Caco-2 (cell line): ENCODE measurements at regions of chr2 and their contacts with region 1.

Region 1: DNA sequence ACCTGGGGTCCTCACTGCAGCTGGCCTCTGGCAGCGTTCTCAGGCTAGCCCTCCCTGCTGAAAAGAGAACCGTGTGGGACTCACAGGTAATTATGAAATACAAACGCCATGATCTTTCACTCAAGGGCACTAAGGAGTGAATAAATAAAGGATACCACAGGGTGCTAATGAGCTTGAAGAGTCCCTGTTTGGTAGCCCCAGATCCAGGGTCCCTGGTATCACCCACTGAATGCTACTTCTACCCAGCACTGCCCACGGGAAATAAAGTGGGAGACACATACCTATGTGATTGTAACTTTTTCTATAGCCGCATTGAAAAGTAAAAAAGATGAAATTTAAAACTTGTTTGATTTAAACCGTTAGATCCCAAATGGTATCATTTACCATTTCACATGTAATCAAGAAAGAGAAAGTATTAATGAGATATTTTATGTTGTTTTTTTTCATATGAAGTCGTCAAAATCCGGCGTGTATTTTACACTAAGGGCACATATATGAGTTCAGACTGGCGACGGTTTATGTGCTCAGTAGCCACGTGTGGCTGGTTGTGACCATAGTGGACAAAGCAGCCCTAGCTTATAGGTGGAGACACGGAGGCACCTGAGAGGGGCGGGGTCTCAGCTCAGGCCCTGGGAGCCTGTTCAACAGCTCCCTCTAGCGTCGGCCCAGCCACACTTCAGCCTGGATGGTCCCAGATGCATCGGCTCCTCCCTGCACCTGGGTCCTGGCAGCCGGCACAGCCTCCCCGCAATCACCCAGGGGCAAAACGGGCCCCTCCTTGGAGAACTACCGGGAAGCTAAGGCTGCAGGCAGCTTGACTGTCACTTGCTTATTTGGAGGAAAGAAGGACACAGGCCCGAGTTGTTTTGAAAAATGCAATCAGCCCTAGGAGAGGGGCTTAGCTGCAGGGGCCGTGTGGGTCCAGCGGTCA is 39.2 kb downstream of the ODC1 start:
- DNase-seq: peak; percentile 91 to 95
- H3K4me3 ChIP-seq: no peak overlapping the region
- H3K4me3 Mint-ChIP-seq: peak overlapping the region; percentile 47
- H3K27ac Mint-ChIP-seq: peak overlapping the region; percentile 65
- H3K4me1 ChIP-seq: peaks cover 13% of the 10 kb centered on the region
- H3K4me1 Mint-ChIP-seq: peaks cover 20% of the 10 kb centered on the region
- H3K27me3 ChIP-seq: no peaks in the 10 kb centered on the region
- H3K27me3 Mint-ChIP-seq: no peaks in the 10 kb centered on the region
- CTCF ChIP-seq: peak; percentile 96 to 97

Region 2: GRCh38 chr2:10097352-10098148 is 311.4 kb before region 1 on chr2:
- CTCF ChIA-PET with region 1: interaction called, 10 read pairs
- POLR2A ChIA-PET with region 1: no interaction called
- intact Hi-C with region 1: no loop called
- DNase-seq: peak; percentile 78 to 85
- H3K4me3 ChIP-seq: no peak overlapping the region
- H3K4me3 Mint-ChIP-seq: no peak overlapping the region
- H3K27ac Mint-ChIP-seq: no peak overlapping the region
- H3K4me1 ChIP-seq: no peaks in the 10 kb centered on the region
- H3K4me1 Mint-ChIP-seq: no peaks in the 10 kb centered on the region
- H3K27me3 ChIP-seq: no peaks in the 10 kb centered on the region
- H3K27me3 Mint-ChIP-seq: no peaks in the 10 kb centered on the region
- CTCF ChIP-seq: peak; percentile 88 to 98

Region 3: DNA sequence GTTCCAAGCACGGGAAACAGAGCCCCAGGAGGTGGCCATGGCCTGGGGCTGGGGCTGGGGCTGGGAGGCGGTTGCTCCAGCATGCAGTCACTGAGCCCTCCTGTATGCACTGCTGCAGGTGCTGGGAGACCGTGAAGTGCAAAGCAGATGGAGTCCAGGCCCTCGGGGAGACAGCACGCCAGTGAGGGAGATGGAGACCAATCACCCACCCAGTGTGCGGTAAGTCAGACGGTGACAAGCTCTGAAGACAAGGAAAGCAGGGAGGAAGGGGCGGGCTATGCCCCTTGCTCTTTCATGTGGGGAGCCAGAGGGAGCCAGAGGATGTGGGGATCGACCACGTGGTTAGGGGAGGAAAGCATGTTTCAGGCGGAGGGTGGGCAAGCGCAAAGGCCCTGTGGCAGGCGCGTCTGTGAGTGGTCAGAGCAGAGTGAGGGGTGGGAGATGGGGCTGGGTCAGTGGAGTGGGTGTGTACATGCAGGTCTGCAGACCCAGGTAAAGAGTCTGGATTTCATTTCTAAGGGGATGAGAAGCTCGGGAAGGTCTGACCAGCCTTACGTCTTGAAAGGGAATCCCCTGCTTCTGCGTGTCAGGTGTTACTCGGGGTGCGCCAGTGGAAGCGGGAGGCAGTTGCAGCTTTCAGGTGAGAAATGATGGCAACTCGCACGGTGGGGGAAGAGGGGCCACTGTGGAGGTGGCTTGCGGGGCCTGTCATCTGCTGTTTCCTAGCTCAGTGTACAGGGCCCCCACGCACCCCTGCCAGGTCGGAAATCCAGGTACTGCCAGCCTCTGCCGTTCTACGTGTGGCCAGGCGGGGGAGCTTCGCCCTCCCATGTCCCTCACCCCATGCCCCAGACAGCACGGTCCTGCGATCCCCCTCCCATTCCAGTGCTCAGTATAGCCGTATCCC is 266.9 kb before region 1 on chr2:
- CTCF ChIA-PET with region 1: interaction called, 22 read pairs
- POLR2A ChIA-PET with region 1: no interaction called
- intact Hi-C with region 1: loop called (anchors 1 kb)
- DNase-seq: peak in 1 of 2 experiments; percentile 56
- H3K4me3 ChIP-seq: no peak overlapping the region
- H3K4me3 Mint-ChIP-seq: no peak overlapping the region
- H3K27ac Mint-ChIP-seq: peak overlapping the region; percentile 23
- H3K4me1 ChIP-seq: 0 out of 2 replicates have a peak, but pooled peaks cover 5% of the 10 kb centered on the region
- H3K4me1 Mint-ChIP-seq: no peaks in the 10 kb centered on the region
- H3K27me3 ChIP-seq: no peaks in the 10 kb centered on the region
- H3K27me3 Mint-ChIP-seq: no peaks in the 10 kb centered on the region
- CTCF ChIP-seq: peak; percentile 45 to 62

Region 4: DNA sequence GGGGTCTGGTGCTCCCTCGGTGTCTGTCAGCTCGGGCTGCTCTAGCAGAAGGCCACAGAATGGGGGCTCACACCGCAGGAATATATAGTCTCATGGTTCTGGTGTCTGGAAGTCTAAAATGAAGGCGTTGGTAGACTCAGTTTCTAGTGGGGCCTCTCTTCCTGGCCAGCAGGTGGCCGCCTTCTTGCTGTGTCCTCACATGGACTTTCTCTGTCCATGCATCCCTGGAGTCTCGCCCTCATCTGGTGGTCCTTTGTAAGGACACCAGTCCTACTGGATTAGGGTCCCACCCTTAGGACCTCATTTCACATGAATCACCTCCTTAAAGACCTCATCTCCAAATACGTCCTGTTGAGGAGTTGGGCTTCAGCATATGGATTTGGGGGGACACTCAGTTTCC is 220.7 kb before region 1 on chr2:
- CTCF ChIA-PET with region 1: interaction called, 5 read pairs
- POLR2A ChIA-PET with region 1: no interaction called
- intact Hi-C with region 1: loop called (anchors 2 kb)
- DNase-seq: peak in 1 of 2 experiments; percentile 61
- H3K4me3 ChIP-seq: no peak overlapping the region
- H3K4me3 Mint-ChIP-seq: no peak overlapping the region
- H3K27ac Mint-ChIP-seq: no peak overlapping the region
- H3K4me1 ChIP-seq: no peaks in the 10 kb centered on the region
- H3K4me1 Mint-ChIP-seq: no peaks in the 10 kb centered on the region
- H3K27me3 ChIP-seq: no peaks in the 10 kb centered on the region
- H3K27me3 Mint-ChIP-seq: no peaks in the 10 kb centered on the region
- CTCF ChIP-seq: peak; percentile 54 to 88

Region 5: GRCh38 chr2:10269711-10270610 is 139.0 kb before region 1 on chr2:
- CTCF ChIA-PET with region 1: interaction called, 24 read pairs
- POLR2A ChIA-PET with region 1: no interaction called
- intact Hi-C with region 1: loop called (anchors 1 kb)
- DNase-seq: peak in 1 of 2 experiments; percentile 21
- H3K4me3 ChIP-seq: no peak overlapping the region
- H3K4me3 Mint-ChIP-seq: no peak overlapping the region
- H3K27ac Mint-ChIP-seq: peak overlapping the region; percentile 55
- H3K4me1 ChIP-seq: peaks cover 14% of the 10 kb centered on the region
- H3K4me1 Mint-ChIP-seq: peaks cover 12% of the 10 kb centered on the region
- H3K27me3 ChIP-seq: no peaks in the 10 kb centered on the region
- H3K27me3 Mint-ChIP-seq: no peaks in the 10 kb centered on the region
- CTCF ChIP-seq: no peak

Region 6: GRCh38 chr2:10331027-10331701 is 77.8 kb before region 1 on chr2:
- CTCF ChIA-PET with region 1: interaction called, 9 read pairs
- POLR2A ChIA-PET with region 1: no interaction called
- intact Hi-C with region 1: loop called (anchors 5 kb)
- DNase-seq: no peak
- H3K4me3 ChIP-seq: no peak overlapping the region
- H3K4me3 Mint-ChIP-seq: no peak overlapping the region
- H3K27ac Mint-ChIP-seq: peak overlapping the region; percentile 77
- H3K4me1 ChIP-seq: peaks cover 39% of the 10 kb centered on the region
- H3K4me1 Mint-ChIP-seq: peaks cover 39% of the 10 kb centered on the region
- H3K27me3 ChIP-seq: no peaks in the 10 kb centered on the region
- H3K27me3 Mint-ChIP-seq: no peaks in the 10 kb centered on the region
- CTCF ChIP-seq: no peak